ENCODE measurements at regions of chr6 and their contacts with region 1.

Region 1: GRCh38 chr6:127302728-127303660 is 36.3 kb downstream of the RNF146 start:
- DNase-seq: peak; percentile 81
- H3K4me3 ChIP-seq: no peak overlapping the region
- H3K27ac ChIP-seq: no peak overlapping the region
- H3K4me1 ChIP-seq: peaks cover 29% of the 10 kb centered on the region
- H3K27me3 ChIP-seq: no peaks in the 10 kb centered on the region
- CTCF ChIP-seq: peak; percentile 43 to 54
- POLR2A ChIP-seq: no peak

Region 2: GRCh38 chr6:127176146-127176545 is 126.8 kb before region 1 on chr6:
- CTCF ChIA-PET with region 1: no interaction called
- POLR2A ChIA-PET with region 1: no interaction called
- dilution Hi-C with region 1: no loop called
- intact Hi-C with region 1: no loop called
- DNase-seq: peak; percentile 83
- H3K4me3 ChIP-seq: no peak overlapping the region
- H3K27ac ChIP-seq: peak overlapping the region; percentile 56
- H3K4me1 ChIP-seq: peaks cover 17% of the 10 kb centered on the region
- H3K27me3 ChIP-seq: no peaks in the 10 kb centered on the region
- CTCF ChIP-seq: no peak
- POLR2A ChIP-seq: no peak

Region 3: GRCh38 chr6:127317388-127318128 is 14.6 kb after region 1 on chr6:
- CTCF ChIA-PET with region 1: interaction called, 10 read pairs
- POLR2A ChIA-PET with region 1: no interaction called
- dilution Hi-C with region 1: no loop called
- intact Hi-C with region 1: no loop called
- DNase-seq: no peak
- H3K4me3 ChIP-seq: no peak overlapping the region
- H3K27ac ChIP-seq: no peak overlapping the region
- H3K4me1 ChIP-seq: no peaks in the 10 kb centered on the region
- H3K27me3 ChIP-seq: no peaks in the 10 kb centered on the region
- CTCF ChIP-seq: no peak
- POLR2A ChIP-seq: no peak

Region 4: GRCh38 chr6:127420556-127420955 is 117.6 kb after region 1 on chr6:
- CTCF ChIA-PET with region 1: interaction called, 13 read pairs
- POLR2A ChIA-PET with region 1: no interaction called
- dilution Hi-C with region 1: no loop called
- intact Hi-C with region 1: loop called (anchors 1 kb)
- DNase-seq: peak; percentile 96
- H3K4me3 ChIP-seq: no peak overlapping the region
- H3K27ac ChIP-seq: peak overlapping the region; percentile 83
- H3K4me1 ChIP-seq: peaks cover 13% of the 10 kb centered on the region
- H3K27me3 ChIP-seq: no peaks in the 10 kb centered on the region
- CTCF ChIP-seq: peak in 1 of 2 donors; percentile 19
- POLR2A ChIP-seq: no peak

Region 5: DNA sequence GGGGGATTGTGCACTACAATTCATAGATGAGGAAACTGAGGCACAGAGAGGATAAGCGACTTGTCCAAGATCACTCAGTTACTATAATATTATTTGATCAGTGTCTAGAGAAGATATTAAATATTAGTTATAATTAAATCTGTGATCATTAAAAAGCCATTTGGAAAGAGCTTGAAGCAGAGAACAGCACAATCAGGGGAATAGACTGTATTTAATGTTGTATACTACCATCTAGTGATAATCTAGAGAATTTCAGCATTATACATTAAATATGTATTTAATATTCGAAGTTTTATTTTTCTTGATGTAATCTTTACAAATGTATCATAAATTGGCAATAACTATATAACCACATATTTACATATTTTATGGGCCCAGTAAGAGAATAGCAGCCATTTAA is 236.3 kb after region 1 on chr6:
- CTCF ChIA-PET with region 1: interaction called, 93 read pairs
- POLR2A ChIA-PET with region 1: no interaction called
- dilution Hi-C with region 1: no loop called
- intact Hi-C with region 1: loop called (anchors 1 kb)
- DNase-seq: peak; percentile 26
- H3K4me3 ChIP-seq: no peak overlapping the region
- H3K27ac ChIP-seq: no peak overlapping the region
- H3K4me1 ChIP-seq: no peaks in the 10 kb centered on the region
- H3K27me3 ChIP-seq: peaks cover 12 to 17% of the 10 kb centered on the region in 2 experiments
- CTCF ChIP-seq: peak in 1 of 2 donors; percentile 3
- POLR2A ChIP-seq: no peak

Region 6: GRCh38 chr6:127641905-127642304 is 338.9 kb after region 1 on chr6:
- CTCF ChIA-PET with region 1: interaction called, 3 read pairs
- POLR2A ChIA-PET with region 1: no interaction called
- dilution Hi-C with region 1: no loop called
- intact Hi-C with region 1: loop called (anchors 2 kb)
- DNase-seq: peak; percentile 41
- H3K4me3 ChIP-seq: no peak overlapping the region
- H3K27ac ChIP-seq: no peak overlapping the region
- H3K4me1 ChIP-seq: no peaks in the 10 kb centered on the region
- H3K27me3 ChIP-seq: peaks cover 8 to 26% of the 10 kb centered on the region in 2 experiments
- CTCF ChIP-seq: peak; percentile 47 to 52
- POLR2A ChIP-seq: no peak